ENCODE measurements at regions of chr6 and their contacts with region 1.

Region 1: GRCh38 chr6:107318100-107318736 is 141.1 kb downstream of the PDSS2 start:
- DNase-seq: peak; percentile 67
- H3K4me3 ChIP-seq: no peak overlapping the region
- H3K27ac ChIP-seq: no peak overlapping the region
- H3K4me1 ChIP-seq: no peaks in the 10 kb centered on the region
- H3K27me3 ChIP-seq: no peaks in the 10 kb centered on the region
- CTCF ChIP-seq: peak; percentile 85

Region 2: DNA sequence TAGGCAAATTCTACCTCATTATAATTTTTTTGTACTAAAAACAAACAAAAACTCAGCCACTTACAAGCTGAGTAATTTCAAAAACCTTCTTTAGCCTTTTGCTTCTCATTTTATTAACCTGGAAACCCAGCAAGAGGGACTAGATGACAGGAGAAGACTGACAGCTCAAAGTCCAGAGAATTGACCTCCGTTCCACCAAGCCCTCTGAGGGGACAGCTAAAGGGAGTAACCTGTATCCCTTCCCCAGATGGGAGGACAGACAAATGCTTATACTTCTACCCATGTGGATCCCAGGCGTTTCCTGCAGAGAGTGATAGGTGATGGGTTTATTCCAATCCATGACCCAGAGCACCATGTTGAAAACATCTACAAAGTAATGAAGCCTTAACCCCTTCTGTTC is 308.7 kb before region 1 on chr6:
- CTCF ChIA-PET with region 1: no interaction called
- POLR2A ChIA-PET with region 1: no interaction called
- intact Hi-C with region 1: no loop called
- DNase-seq: no peak
- H3K4me3 ChIP-seq: no peak overlapping the region
- H3K27ac ChIP-seq: no peak overlapping the region
- H3K4me1 ChIP-seq: no peaks in the 10 kb centered on the region
- H3K27me3 ChIP-seq: no peaks in the 10 kb centered on the region
- CTCF ChIP-seq: no peak

Region 3: GRCh38 chr6:107334026-107334425 is 15.8 kb after region 1 on chr6:
- CTCF ChIA-PET with region 1: no interaction called
- POLR2A ChIA-PET with region 1: interaction called, 13 read pairs
- intact Hi-C with region 1: no loop called
- DNase-seq: no peak
- H3K4me3 ChIP-seq: no peak overlapping the region
- H3K27ac ChIP-seq: no peak overlapping the region
- H3K4me1 ChIP-seq: no peaks in the 10 kb centered on the region
- H3K27me3 ChIP-seq: no peaks in the 10 kb centered on the region
- CTCF ChIP-seq: no peak

Region 4: DNA sequence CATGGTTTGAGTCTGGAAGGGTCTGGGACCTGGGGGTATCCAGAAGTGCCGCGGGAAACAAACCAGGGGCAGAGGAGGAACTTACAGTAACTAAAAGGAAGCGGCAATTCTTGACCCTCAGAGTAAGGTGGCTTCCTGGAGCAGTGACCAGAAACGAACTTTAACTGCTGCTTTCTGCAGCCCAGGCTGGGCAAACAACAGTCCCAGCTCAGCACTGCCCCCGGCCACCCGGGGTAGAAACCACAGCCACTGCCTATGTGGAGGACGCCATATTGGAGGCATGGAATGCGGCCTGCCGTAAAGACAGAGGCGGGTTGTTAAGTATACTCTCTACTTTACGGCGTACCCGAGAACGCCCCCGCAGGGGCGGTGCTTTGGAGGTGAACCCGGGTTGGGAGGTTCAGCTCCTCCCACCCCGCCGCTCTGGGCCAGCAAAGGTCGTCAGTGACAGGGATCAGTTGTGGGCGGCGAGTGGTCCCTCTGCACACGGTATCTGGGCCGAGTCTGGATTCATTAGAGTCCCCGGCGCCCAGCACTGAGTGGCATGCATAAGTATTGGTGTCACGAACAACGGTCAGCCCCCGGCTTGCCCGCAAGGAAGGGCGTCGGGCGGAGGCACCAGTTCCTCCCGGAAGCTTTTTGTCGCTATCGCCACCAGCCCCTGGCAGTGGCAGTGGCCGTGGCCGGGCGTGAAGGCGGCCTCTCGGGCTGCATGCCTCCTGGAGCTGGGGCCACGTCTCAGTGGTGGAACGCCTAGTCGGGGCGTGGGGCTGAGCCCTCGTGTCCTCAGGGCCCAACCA is 141.3 kb after region 1 on chr6 and contains the start of gene PDSS2:
- CTCF ChIA-PET with region 1: no interaction called
- POLR2A ChIA-PET with region 1: no interaction called
- intact Hi-C with region 1: loop called (anchors 10 kb)
- DNase-seq: peak; percentile 99
- H3K4me3 ChIP-seq: peak within 1 kb of the TSS; percentile 83
- H3K27ac ChIP-seq: peak within 1 kb of the TSS; percentile 79
- H3K4me1 ChIP-seq: peaks cover 2% of the 10 kb centered on the region
- H3K27me3 ChIP-seq: no peaks in the 10 kb centered on the region
- CTCF ChIP-seq: peak; percentile 62
- total RNA-seq, gene PDSS2: 15.8 and 16.1 TPM in 2 replicates